CD14-positive monocyte (primary cell): ENCODE measurements at regions of chr1 and their contacts with region 1.

Region 1: GRCh38 chr1:168466092-168466713 is 77.6 kb downstream of the XCL2 start:
- DNase-seq: no peak
- H3K4me3 ChIP-seq: no peak overlapping the region
- H3K4me3 Mint-ChIP-seq: peak overlapping the region in 1 of 2 donors; percentile 49
- H3K27ac ChIP-seq: peak overlapping the region in 1 of 2 donors; percentile 60
- H3K27ac Mint-ChIP-seq: peak overlapping the region in 1 of 7 donors; percentile 87
- H3K4me1 ChIP-seq: peaks cover 21 to 38% of the 10 kb centered on the region in 2 donors
- H3K4me1 Mint-ChIP-seq: peaks cover 44% of the 10 kb centered on the region
- H3K27me3 ChIP-seq: no peaks in the 10 kb centered on the region
- H3K27me3 Mint-ChIP-seq: no peaks in the 10 kb centered on the region
- CTCF ChIP-seq: no peak

Region 2: GRCh38 chr1:168509875-168510791 is 43.9 kb after region 1 on chr1:
- intact Hi-C with region 1: loop called in 1 of 2 experiments (anchors 10 kb)
- DNase-seq: peak in 1 of 3 donors; percentile 56
- H3K4me3 ChIP-seq: no peak overlapping the region
- H3K4me3 Mint-ChIP-seq: no peak overlapping the region
- H3K27ac ChIP-seq: no peak overlapping the region
- H3K27ac Mint-ChIP-seq: peak overlapping the region in 4 of 7 donors; percentile 32 to 73 (median 37)
- H3K4me1 ChIP-seq: peaks cover 34 to 36% of the 10 kb centered on the region in 2 donors
- H3K4me1 Mint-ChIP-seq: peaks cover 59% of the 10 kb centered on the region
- H3K27me3 ChIP-seq: no peaks in the 10 kb centered on the region
- H3K27me3 Mint-ChIP-seq: peaks cover 0 to 4% (median 0%) of the 10 kb centered on the region in 3 donors
- CTCF ChIP-seq: no peak